A549 (cell line): ENCODE measurements at regions of chr1 and their contacts with region 1.

Region 1: GRCh38 chr1:158035976-158036583 is 42.6 kb downstream of the KIRREL1 start:
- DNase-seq: peak in 1 of 2 experiments; percentile 72
- ATAC-seq: peak; percentile 23 to 57; a peak in 3 of 6 replicates
- H3K4me3 ChIP-seq: no peak overlapping the region
- H3K27ac ChIP-seq: peak overlapping the region; percentile 66 to 84; a peak in 5 of 6 replicates
- H3K4me1 ChIP-seq: peaks cover 36% of the 10 kb centered on the region
- CTCF ChIP-seq: peak; percentile 88
- EP300 ChIP-seq: no peak
- POLR2A ChIP-seq: no peak
- RAD21 ChIP-seq: peak; percentile 81 to 84

Region 2: DNA sequence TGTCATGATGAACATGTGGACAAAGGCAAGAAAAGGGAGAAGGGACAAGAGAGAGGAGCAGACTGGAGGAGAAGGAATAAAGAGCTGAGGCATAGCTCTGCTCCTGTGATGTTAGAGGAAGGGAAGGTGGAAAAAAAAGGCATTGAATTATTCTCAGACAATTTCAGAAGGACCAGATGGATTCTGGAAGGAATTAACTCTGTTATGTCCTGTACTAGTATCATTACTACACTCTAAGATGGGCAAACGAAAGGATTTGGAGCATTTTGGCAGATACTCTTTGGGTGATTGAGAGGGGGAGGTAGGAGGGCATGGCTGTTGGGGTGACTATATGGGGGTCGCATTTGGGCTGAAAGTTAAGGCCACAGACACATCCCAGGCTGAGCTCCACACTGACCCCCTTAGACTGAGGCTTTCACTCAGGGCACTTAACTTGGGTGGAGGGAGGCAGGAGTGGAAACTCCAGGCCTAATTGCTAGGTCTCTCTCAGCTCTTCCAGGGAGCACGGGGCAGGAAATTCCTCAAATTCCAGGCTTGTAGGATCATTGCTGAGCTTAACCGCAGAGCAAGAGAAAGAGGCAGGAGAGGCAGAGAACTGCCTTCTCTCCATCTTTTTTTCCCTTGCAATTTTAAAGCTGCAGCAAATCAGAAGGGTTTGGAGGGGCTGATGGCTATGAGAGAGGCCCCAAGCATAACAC is 16.8 kb before region 1 on chr1:
- CTCF ChIA-PET with region 1: interaction called, 1,281 read pairs
- POLR2A ChIA-PET with region 1: interaction called, 6 read pairs
- DNase-seq: peak; percentile 76 to 87
- ATAC-seq: peak; percentile 94
- H3K4me3 ChIP-seq: no peak overlapping the region
- H3K27ac ChIP-seq: peak overlapping the region; percentile 89 to 98
- H3K4me1 ChIP-seq: peaks cover 88% of the 10 kb centered on the region
- CTCF ChIP-seq: no peak; the same call in 2 of the 3 replicates
- EP300 ChIP-seq: peak in 1 of 2 experiments; percentile 44; a peak in 1 of 5 replicates
- POLR2A ChIP-seq: no peak
- RAD21 ChIP-seq: peak; percentile 33 to 43; a peak in 3 of 5 replicates

Region 3: DNA sequence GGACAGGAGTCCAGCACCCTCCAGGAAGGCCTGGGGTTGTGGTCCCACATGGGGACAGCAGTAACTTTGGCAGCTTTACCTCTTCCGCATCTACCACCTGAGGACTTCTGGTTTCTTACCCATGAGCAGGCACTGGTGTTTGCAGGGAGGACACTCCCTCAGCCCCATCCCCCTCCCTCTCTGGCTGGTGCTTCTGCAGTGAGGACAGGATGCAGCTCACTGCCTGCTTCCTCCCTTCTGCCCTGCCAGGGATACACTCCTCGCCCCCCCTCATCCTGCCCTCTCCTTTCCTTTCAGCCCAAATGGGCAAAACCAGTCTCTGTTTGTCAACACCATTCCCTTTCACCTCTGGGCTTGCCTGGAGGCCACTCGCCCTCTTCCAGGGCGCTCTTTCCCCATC is 19.8 kb after region 1 on chr1:
- CTCF ChIA-PET with region 1: interaction called, 10 read pairs
- POLR2A ChIA-PET with region 1: interaction called, 4 read pairs
- DNase-seq: no peak
- ATAC-seq: peak in 1 of 2 experiments; percentile 22; a peak in 1 of 6 replicates
- H3K4me3 ChIP-seq: no peak overlapping the region
- H3K27ac ChIP-seq: no peak overlapping the region
- H3K4me1 ChIP-seq: peaks cover 19% of the 10 kb centered on the region
- CTCF ChIP-seq: no peak
- EP300 ChIP-seq: no peak
- POLR2A ChIP-seq: no peak
- RAD21 ChIP-seq: no peak